Naive thymus-derived CD4-positive, alpha-beta T cell (primary cell): ENCODE measurements at regions of chr9 and their contacts with region 1.

Region 1: GRCh38 chr9:84397151-84397728 is 56.7 kb upstream of the SLC28A3 start:
- DNase-seq: peak; percentile 32 to 62 (median 55)
- ATAC-seq: peak; percentile 74
- H3K4me3 ChIP-seq: no peak overlapping the region
- H3K4me3 Mint-ChIP-seq: no peak overlapping the region
- H3K27ac ChIP-seq: no peak overlapping the region
- H3K27ac Mint-ChIP-seq: peak overlapping the region in 1 of 9 donors; percentile 46
- H3K4me1 ChIP-seq: no peaks in the 10 kb centered on the region
- H3K4me1 Mint-ChIP-seq: no peaks in the 10 kb centered on the region
- H3K27me3 ChIP-seq: no peaks in the 10 kb centered on the region
- H3K27me3 Mint-ChIP-seq: peaks cover 0 to 8% (median 0%) of the 10 kb centered on the region in 5 donors

Region 2: DNA sequence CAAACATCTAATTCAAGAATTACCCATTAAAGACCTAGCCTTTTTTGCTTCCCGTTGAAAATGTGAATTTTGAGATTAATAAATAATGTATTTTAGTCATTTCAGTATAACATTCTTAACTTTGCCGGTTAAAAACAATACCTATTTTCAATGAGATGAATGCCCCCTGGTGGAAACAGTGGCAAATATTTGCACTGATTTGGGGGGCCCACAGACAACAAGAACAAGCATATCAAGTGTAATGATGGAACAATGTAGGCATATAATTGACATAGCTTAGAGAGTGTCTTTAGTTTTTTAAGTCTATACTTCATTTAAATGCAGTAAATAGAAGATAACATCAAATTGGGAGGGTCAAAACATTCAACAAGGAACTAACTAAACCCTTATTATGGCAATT is 384.2 kb after region 1 on chr9:
- CTCF ChIA-PET with region 1: no interaction called
- POLR2A ChIA-PET with region 1: no interaction called
- intact Hi-C with region 1: loop called in 1 of 2 experiments (anchors 2 kb)
- DNase-seq: no peak
- ATAC-seq: no peak
- H3K4me3 ChIP-seq: no peak overlapping the region
- H3K4me3 Mint-ChIP-seq: no peak overlapping the region
- H3K27ac ChIP-seq: no peak overlapping the region
- H3K27ac Mint-ChIP-seq: no peak overlapping the region
- H3K4me1 ChIP-seq: no peaks in the 10 kb centered on the region
- H3K4me1 Mint-ChIP-seq: no peaks in the 10 kb centered on the region
- H3K27me3 ChIP-seq: no peaks in the 10 kb centered on the region
- H3K27me3 Mint-ChIP-seq: peaks cover 2 to 34% (median 21%) of the 10 kb centered on the region in 5 donors

Region 3: DNA sequence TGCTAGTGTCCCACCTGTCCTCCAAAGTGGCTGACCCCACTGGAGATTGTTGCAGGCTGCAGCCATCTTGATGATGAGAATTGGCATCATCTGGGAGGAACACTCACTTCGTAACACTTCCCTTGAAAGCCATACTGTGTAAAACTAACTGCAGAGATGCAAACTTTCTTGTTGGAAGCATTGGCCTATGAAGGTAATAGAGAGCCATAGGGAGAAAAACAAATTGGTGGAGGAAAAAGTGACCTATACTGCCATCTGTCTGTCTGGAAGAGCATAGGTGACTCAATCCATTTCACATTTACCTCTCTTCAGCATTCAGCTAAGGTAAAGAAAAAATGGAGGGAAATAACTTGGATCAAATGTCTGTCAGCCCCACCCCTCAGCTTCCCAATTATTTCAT is 745.7 kb after region 1 on chr9:
- CTCF ChIA-PET with region 1: no interaction called
- POLR2A ChIA-PET with region 1: no interaction called
- intact Hi-C with region 1: loop called in 1 of 2 experiments (anchors 2 kb)
- DNase-seq: no peak
- ATAC-seq: no peak
- H3K4me3 ChIP-seq: no peak overlapping the region
- H3K4me3 Mint-ChIP-seq: no peak overlapping the region
- H3K27ac ChIP-seq: no peak overlapping the region
- H3K27ac Mint-ChIP-seq: no peak overlapping the region
- H3K4me1 ChIP-seq: no peaks in the 10 kb centered on the region
- H3K4me1 Mint-ChIP-seq: no peaks in the 10 kb centered on the region
- H3K27me3 ChIP-seq: no peaks in the 10 kb centered on the region
- H3K27me3 Mint-ChIP-seq: peaks cover 0 to 14% (median 11%) of the 10 kb centered on the region in 5 donors

Region 4: DNA sequence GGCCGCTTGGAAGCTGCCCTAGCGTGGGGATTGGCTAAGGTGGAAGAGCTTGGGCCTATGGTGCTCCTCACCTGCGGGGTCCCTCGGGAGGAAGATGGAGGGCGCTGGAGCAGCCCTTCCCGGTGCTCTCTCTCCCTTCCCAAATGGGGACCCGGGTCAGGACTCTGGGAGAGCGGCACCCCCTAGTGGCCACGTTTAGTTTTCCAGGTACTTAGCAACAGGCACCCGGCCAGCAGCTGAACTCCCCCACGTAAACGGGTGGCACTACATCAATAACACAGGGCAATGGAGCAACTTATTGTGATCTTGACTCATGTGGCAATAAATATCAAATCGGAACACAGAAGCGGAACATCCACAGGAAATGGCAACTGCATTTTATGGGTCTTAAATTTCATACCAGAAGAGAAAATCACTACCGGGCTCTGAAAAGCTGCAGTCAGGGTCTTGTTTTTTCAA is 1027.9 kb after region 1 on chr9:
- CTCF ChIA-PET with region 1: no interaction called
- POLR2A ChIA-PET with region 1: no interaction called
- intact Hi-C with region 1: loop called in 1 of 2 experiments (anchors 1 kb)
- DNase-seq: peak in 2 of 9 donors; percentile 12 to 62
- ATAC-seq: peak; percentile 54
- H3K4me3 ChIP-seq: no peak overlapping the region
- H3K4me3 Mint-ChIP-seq: no peak overlapping the region
- H3K27ac ChIP-seq: no peak overlapping the region
- H3K27ac Mint-ChIP-seq: no peak overlapping the region
- H3K4me1 ChIP-seq: no peaks in the 10 kb centered on the region
- H3K4me1 Mint-ChIP-seq: peaks cover 0 to 11% (median 0%) of the 10 kb centered on the region in 7 donors
- H3K27me3 ChIP-seq: no peaks in the 10 kb centered on the region
- H3K27me3 Mint-ChIP-seq: peaks cover 9 to 42% (median 33%) of the 10 kb centered on the region in 5 donors

Region 5: GRCh38 chr9:85702726-85703289 is 1305.6 kb after region 1 on chr9:
- CTCF ChIA-PET with region 1: no interaction called
- POLR2A ChIA-PET with region 1: no interaction called
- intact Hi-C with region 1: loop called in 1 of 2 experiments (anchors 1 kb)
- DNase-seq: no peak
- ATAC-seq: no peak
- H3K4me3 ChIP-seq: no peak overlapping the region
- H3K4me3 Mint-ChIP-seq: no peak overlapping the region
- H3K27ac ChIP-seq: no peak overlapping the region
- H3K27ac Mint-ChIP-seq: peak overlapping the region in 3 of 9 donors; percentile 17 to 56 (median 44)
- H3K4me1 ChIP-seq: peaks cover 0 to 3% of the 10 kb centered on the region in 2 donors
- H3K4me1 Mint-ChIP-seq: peaks cover 21 to 64% (median 46%) of the 10 kb centered on the region in 7 donors
- H3K27me3 ChIP-seq: no peaks in the 10 kb centered on the region
- H3K27me3 Mint-ChIP-seq: no peaks in the 10 kb centered on the region